ENCODE measurements at regions of chr11 and their contacts with region 1.

Region 1: GRCh38 chr11:113875234-113876073 is at the start of gene USP28:
- DNase-seq: peak; percentile 99
- ATAC-seq: peak; percentile 89
- total RNA-seq, gene USP28: 145 TPM

Region 2: DNA sequence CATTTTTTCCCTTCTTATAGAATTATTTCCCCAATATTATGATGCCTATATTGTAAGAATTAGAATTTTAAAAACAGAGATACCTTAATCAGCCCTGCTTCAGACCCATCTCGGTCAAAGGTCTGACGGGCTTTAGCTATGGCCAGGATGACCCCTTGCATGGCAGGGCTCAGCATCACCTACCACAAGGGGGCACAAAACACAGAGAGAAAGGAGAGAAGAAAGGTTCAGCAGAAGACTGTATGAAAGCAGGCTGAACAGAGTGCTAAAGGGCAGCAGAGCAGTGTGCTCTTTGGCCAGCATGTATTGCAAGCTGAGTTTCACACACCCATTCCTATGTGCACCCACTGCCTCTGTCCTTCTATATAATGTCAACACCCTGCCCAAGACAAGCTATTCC is 69.0 kb before region 1 on chr11:
- intact Hi-C with region 1: loop called (anchors 10 kb)
- DNase-seq: peak; percentile 30
- ATAC-seq: peak; percentile 65

Region 3: DNA sequence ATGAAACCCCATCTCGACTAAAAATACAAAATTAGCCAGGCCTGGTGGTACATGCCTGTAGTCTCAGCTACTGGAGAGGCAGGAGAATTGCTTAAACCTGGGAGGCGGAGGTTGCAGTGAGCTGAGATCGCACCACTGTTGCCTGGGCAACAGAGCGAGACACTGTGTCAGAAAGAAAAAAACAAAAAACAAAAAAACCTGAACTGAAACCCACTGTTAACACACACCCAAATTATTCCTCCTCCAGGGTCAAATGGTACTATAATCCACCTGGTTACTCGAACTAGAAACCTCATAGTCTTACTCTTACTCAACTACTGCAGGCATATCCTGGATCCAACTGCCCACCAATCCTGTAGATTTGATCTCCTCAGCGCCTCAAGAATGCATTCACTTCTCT is 35.6 kb before region 1 on chr11:
- intact Hi-C with region 1: loop called (anchors 5 kb)
- DNase-seq: no peak
- ATAC-seq: no peak

Region 4: GRCh38 chr11:113947994-113948393 is 72.5 kb after region 1 on chr11:
- intact Hi-C with region 1: no loop called
- DNase-seq: no peak
- ATAC-seq: no peak

Region 5: GRCh38 chr11:114121804-114122504 is 246.5 kb after region 1 on chr11:
- intact Hi-C with region 1: no loop called
- DNase-seq: no peak
- ATAC-seq: no peak

Region 6: DNA sequence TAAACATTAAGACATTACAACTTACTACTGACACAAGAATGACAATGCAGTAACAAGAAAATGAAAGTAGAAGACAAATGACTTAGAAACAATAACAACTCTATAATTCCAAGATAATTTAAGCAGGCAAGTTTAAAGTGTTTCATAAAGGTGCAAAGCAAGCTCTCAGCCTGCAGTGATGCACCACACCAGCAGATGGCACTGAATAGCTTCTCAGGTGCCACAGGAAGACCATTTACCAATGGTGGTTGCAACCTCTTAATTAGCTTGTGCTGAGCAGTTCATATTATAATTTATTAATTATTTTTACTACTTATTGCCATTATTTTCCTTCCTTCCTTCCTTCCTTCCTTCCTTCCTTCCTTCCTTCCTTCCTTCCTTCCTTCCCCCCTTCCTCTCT is 863.5 kb after region 1 on chr11:
- intact Hi-C with region 1: no loop called
- DNase-seq: no peak
- ATAC-seq: no peak